GM10248 (cell line): ENCODE measurements at regions of chr11 and their contacts with region 1.

Region 1: GRCh38 chr11:96054870-96055705 is 131.2 kb upstream of the MTMR2 start:
- DNase-seq: no peak
- CTCF ChIP-seq: peak; percentile 48

Region 2: GRCh38 chr11:95937358-95937757 is 117.7 kb before region 1 on chr11:
- CTCF ChIA-PET with region 1: no interaction called
- POLR2A ChIA-PET with region 1: no interaction called
- DNase-seq: no peak
- CTCF ChIP-seq: no peak

Region 3: DNA sequence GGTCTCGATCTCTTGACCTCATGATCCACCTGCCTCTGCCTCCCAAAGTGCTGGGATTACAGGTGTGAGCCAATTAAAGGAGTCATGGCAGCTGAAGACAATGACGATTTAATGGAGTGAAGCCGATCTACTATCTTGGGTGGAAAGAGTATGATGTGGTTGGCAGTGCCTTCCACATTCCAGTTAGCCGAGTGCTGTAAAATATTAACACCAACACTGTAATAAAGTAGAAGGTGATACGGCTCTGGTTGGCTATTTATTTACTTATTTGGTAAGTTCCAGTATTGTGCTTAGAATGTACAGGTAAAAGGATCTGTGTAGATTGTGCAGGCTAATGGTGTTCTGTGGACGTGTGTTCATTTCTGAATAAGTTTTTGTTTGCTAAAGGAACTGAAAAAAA is 18.4 kb after region 1 on chr11:
- CTCF ChIA-PET with region 1: interaction called, 17 read pairs
- POLR2A ChIA-PET with region 1: no interaction called
- DNase-seq: no peak
- CTCF ChIP-seq: no peak

Region 4: DNA sequence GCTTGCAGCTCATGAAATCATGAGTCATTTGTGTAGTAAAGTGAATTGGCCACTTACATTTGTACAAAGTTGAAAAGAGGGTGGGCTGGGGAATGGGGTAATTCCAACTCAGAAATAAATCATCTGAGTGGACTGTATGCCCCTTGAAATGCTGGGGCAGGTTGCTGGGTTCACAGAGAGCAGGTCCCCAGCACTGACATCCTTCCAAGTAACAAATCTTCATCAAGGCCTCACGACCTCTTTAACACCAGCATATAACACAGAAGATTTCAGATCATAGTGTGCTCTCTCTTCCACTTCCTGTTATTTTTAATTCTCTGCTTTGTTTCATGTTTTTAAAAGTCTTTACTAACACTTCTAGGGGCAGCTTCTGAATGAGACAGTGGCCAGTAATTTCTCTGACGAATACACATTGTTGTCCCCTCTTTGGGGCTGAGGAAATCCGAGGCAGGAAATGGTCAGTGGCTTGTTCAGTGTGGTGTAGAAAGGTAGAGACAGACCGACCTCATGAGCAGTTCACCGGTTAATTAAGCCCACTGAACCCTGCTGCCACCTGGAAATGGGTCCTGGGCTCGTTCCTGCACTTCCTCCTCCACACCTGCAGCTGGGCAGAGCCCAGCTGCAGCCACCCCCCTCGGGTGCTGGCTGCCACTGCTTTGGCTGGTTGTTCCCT is 160.2 kb after region 1 on chr11:
- CTCF ChIA-PET with region 1: no interaction called
- POLR2A ChIA-PET with region 1: no interaction called
- DNase-seq: peak; percentile 35
- CTCF ChIP-seq: no peak

Region 5: GRCh38 chr11:96389720-96390487 is 334.8 kb after region 1 on chr11 and contains the starts of genes CCDC82 and JRKL:
- CTCF ChIA-PET with region 1: interaction called, 12 read pairs
- POLR2A ChIA-PET with region 1: no interaction called
- DNase-seq: peak; percentile 98
- CTCF ChIP-seq: no peak